T-cell (primary cell): ENCODE measurements at regions of chr12 and their contacts with region 1.

Region 1: DNA sequence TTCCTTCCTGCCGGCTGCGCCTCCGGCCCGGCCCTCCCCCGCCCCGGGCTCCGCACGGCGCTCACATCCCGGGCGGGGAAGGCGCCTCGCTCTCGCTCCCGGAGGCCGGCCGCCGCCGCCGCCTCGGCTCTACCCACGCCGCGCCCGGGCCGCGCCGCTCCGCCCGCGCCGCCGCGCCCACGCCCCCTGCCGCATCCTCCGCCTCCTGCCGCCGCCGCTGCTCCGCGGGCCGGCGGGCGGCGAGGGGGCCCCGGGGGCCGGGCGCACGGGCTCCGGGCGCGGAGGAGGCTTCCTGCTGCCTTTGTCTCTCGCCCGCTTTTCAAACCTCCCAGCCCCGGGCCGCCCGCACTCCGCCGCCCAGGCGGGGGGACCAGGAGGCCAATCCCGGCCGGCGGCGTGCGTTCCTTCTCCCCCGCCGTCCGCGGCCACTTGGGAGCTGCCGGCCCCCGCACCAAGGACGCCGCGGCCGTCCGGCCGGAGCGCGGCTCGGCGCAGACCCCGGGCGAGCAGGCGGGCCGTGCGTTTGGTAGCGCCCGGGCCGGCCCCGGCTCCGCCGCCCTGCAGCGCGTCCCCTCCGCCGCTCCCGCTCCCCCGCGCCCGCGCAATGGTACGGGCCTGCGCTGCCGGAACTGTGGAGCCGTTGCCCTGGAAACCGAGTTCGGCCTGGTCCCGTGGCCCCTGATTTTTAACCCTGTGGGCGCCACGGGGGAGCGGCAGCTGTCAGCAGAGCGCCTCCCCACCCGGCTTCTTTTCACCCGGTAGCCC is at the start of gene FBXL14:
- DNase-seq: peak; percentile 77 to 95 (median 87)
- ATAC-seq: peak; percentile 70 to 75 (median 72)
- H3K4me3 ChIP-seq: peak within 1 kb of the TSS; percentile 78 to 79
- H3K4me3 Mint-ChIP-seq: peak within 1 kb of the TSS; percentile 85 to 95 (median 92)
- H3K27ac ChIP-seq: peak within 1 kb of the TSS; percentile 88
- H3K27ac Mint-ChIP-seq: peak within 1 kb of the TSS; percentile 92 to 93
- H3K4me1 ChIP-seq: peaks cover 17 to 35% of the 10 kb centered on the region in 2 experiments
- H3K4me1 Mint-ChIP-seq: peaks cover 42 to 54% (median 51%) of the 10 kb centered on the region in 3 donors
- H3K27me3 ChIP-seq: no peaks in the 10 kb centered on the region
- H3K27me3 Mint-ChIP-seq: no peaks in the 10 kb centered on the region
- total RNA-seq, gene FBXL14: 27.3 to 48.7 (median 42.5) TPM

Region 2: GRCh38 chr12:1583421-1584078 is 10.9 kb before region 1 on chr12:
- CTCF ChIA-PET with region 1: interaction called, 10 to 12 read pairs
- POLR2A ChIA-PET with region 1: no interaction called
- DNase-seq: peak in 32 of 35 experiments; percentile 24 to 87 (median 53)
- ATAC-seq: peak; percentile 68 to 79 (median 74)
- H3K4me3 ChIP-seq: no peak overlapping the region
- H3K4me3 Mint-ChIP-seq: peak overlapping the region in 1 of 3 donors; percentile 7
- H3K27ac ChIP-seq: no peak overlapping the region
- H3K27ac Mint-ChIP-seq: peak overlapping the region in 1 of 2 donors; percentile 48
- H3K4me1 ChIP-seq: peaks cover 0 to 9% of the 10 kb centered on the region in 2 experiments
- H3K4me1 Mint-ChIP-seq: peaks cover 25 to 26% (median 26%) of the 10 kb centered on the region in 3 donors
- H3K27me3 ChIP-seq: no peaks in the 10 kb centered on the region
- H3K27me3 Mint-ChIP-seq: no peaks in the 10 kb centered on the region

Region 3: DNA sequence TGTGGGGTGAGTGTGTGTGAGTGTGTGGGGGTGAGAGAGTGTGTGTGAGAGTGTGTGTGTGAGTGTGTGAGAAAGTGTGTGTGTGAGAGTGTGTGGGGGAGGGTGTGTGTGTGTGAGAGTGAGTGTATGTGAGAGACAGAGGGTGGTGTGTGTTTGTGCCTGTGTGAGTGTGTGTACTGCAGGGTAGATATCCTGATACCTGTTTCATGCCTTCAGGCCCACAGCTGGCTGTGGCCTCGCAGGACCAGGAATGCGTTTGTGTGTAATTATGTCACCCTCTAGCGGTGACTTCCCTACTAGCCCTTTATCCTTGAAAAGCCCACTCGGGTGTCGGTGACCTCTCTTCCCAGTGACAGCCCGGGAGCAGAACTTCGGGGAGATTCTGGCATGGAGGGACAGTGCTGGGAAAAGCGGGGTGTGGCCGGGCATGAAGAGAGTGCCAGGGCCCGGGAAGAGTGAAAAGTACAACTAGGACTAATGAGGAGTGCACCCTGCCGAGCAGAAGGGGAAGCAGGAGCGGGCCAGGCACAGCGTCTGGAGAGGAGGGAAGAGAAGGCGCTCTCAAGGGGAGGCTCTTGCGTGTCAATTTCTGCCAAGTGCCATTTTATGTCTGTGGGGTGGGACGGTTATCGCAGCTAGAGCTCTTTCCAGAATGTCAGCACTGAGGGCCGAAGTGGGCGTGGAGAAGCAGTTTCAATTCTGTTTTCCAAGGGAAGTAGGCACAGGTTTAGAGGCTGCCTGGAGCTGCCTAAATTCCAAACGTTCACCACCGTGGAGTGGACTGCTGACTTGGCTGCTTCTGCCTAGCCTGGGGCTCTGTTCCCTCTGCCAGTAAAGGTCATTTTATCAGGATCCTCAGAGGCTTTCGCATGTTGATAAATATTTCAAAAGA is 10.9 kb after region 1 on chr12:
- CTCF ChIA-PET with region 1: interaction called, 3 to 11 read pairs
- POLR2A ChIA-PET with region 1: interaction called in 1 of 2 experiments, 3 read pairs
- DNase-seq: peak in 34 of 35 experiments; percentile 27 to 86 (median 48)
- ATAC-seq: peak; percentile 65 to 79 (median 67)
- H3K4me3 ChIP-seq: peak overlapping the region; percentile 40 to 58
- H3K4me3 Mint-ChIP-seq: peak overlapping the region; percentile 76 to 85 (median 79)
- H3K27ac ChIP-seq: no peak overlapping the region
- H3K27ac Mint-ChIP-seq: peak overlapping the region; percentile 23 to 64
- H3K4me1 ChIP-seq: peaks cover 8 to 28% of the 10 kb centered on the region in 2 experiments
- H3K4me1 Mint-ChIP-seq: peaks cover 33 to 43% (median 41%) of the 10 kb centered on the region in 3 donors
- H3K27me3 ChIP-seq: peaks cover 0 to 7% of the 10 kb centered on the region in 2 experiments
- H3K27me3 Mint-ChIP-seq: peaks cover 0 to 3% of the 10 kb centered on the region in 2 donors